MCF 10A (cell line): ENCODE measurements at regions of chr14 and their contacts with region 1.

Region 1: GRCh38 chr14:39174560-39175444 is at the start of gene PNN:
- DNase-seq: peak; percentile 99
- H3K4me3 Mint-ChIP-seq: peak within 1 kb of the TSS; percentile 93
- H3K27ac Mint-ChIP-seq: peak within 1 kb of the TSS; percentile 98
- H3K4me1 Mint-ChIP-seq: peaks cover 8% of the 10 kb centered on the region
- H3K27me3 Mint-ChIP-seq: no peaks in the 10 kb centered on the region
- CTCF ChIP-seq: no peak
- total RNA-seq, gene PNN: 82.6 and 96.7 TPM in 2 replicates

Region 2: GRCh38 chr14:39145266-39145966 is 29.4 kb before region 1 on chr14:
- CTCF ChIA-PET with region 1: interaction called, 5 read pairs
- POLR2A ChIA-PET with region 1: interaction called, 10 read pairs
- intact Hi-C with region 1: no loop called
- DNase-seq: no peak
- H3K4me3 Mint-ChIP-seq: no peak overlapping the region
- H3K27ac Mint-ChIP-seq: no peak overlapping the region
- H3K4me1 Mint-ChIP-seq: no peaks in the 10 kb centered on the region
- H3K27me3 Mint-ChIP-seq: no peaks in the 10 kb centered on the region
- CTCF ChIP-seq: no peak